PC-3 (cell line): ENCODE measurements at regions of chr13 and their contacts with region 1.

Region 1: GRCh38 chr13:68927387-68928026 is 1180.1 kb upstream of the ATXN8OS start:
- DNase-seq: peak; percentile 60
- ATAC-seq: peak; percentile 84
- H3K4me3 ChIP-seq: no peak overlapping the region
- H3K27ac ChIP-seq: no peak overlapping the region
- H3K4me1 ChIP-seq: no peaks in the 10 kb centered on the region
- H3K27me3 ChIP-seq: no peaks in the 10 kb centered on the region
- CTCF ChIP-seq: peak; percentile 65

Region 2: DNA sequence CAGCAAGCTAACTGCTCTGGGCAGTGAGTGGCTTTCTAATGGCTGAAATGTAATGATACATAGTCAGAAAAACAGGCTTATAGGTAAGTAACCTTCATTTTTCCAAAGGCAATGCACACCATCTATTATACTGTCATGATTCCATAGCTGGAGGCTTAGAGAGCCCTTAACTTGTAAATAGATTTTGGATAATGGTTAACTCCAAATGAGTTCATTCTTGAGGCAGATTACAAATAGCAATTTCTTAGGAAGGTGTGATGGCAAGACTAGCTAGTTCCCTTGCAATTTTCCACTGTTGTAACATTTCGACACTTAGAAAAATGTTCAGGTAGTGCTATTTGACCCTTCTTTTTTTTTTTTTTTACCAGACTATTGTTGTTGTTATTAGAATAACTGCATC is 907.6 kb before region 1 on chr13:
- CTCF ChIA-PET with region 1: no interaction called
- POLR2A ChIA-PET with region 1: no interaction called
- intact Hi-C with region 1: no loop called
- DNase-seq: no peak
- ATAC-seq: no peak
- H3K4me3 ChIP-seq: no peak overlapping the region
- H3K27ac ChIP-seq: no peak overlapping the region
- H3K4me1 ChIP-seq: no peaks in the 10 kb centered on the region
- H3K27me3 ChIP-seq: no peaks in the 10 kb centered on the region
- CTCF ChIP-seq: no peak

Region 3: DNA sequence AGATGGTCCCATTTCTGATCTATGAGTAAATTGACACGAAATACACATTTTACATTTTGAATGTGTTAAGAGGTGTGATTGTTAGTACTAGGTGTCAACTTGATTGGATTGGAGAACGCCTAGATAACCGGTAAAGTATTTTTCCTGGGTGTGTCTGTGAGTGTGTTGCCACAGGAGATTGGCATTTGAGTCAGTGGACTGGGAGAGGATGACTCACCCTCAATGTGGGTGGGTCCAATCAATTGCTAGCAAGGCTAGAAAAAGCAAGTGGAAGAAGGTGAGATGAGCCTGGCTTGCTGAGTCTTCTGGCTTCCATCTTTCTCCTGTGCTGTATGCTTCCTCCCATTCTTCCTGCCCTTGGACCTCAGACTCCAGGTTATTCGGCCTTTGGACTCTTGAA is 736.7 kb before region 1 on chr13:
- CTCF ChIA-PET with region 1: no interaction called
- POLR2A ChIA-PET with region 1: no interaction called
- intact Hi-C with region 1: no loop called
- DNase-seq: peak; percentile 78
- ATAC-seq: peak; percentile 87
- H3K4me3 ChIP-seq: no peak overlapping the region
- H3K27ac ChIP-seq: no peak overlapping the region
- H3K4me1 ChIP-seq: peaks cover 10% of the 10 kb centered on the region
- H3K27me3 ChIP-seq: no peaks in the 10 kb centered on the region
- CTCF ChIP-seq: no peak

Region 4: GRCh38 chr13:68358294-68358705 is 569.2 kb before region 1 on chr13:
- CTCF ChIA-PET with region 1: no interaction called
- POLR2A ChIA-PET with region 1: no interaction called
- intact Hi-C with region 1: loop called (anchors 5 kb)
- DNase-seq: peak; percentile 61
- ATAC-seq: peak; percentile 88
- H3K4me3 ChIP-seq: peak overlapping the region; percentile 23; the same call in 1 of the 2 replicates
- H3K27ac ChIP-seq: peak overlapping the region; percentile 82
- H3K4me1 ChIP-seq: peaks cover 16% of the 10 kb centered on the region
- H3K27me3 ChIP-seq: no peaks in the 10 kb centered on the region
- CTCF ChIP-seq: no peak

Region 5: DNA sequence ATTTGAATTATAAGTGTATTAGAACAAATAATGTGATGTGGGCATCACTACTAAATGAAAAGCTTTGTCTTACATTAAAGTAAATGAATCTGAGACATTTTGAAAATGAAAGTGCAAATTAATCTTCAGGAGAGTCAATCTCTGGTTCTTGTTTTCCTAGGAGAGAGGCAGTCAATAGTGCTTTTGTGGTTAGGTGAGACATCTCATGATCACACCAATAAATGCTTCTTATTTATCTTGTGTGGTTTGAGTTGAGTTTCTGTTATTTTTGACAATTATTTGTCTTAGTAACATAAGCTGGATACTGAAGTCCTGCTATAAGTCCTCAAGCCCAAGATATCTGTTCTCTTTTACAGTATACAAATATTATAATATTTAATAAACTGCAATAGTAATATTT is 319.4 kb before region 1 on chr13:
- CTCF ChIA-PET with region 1: no interaction called
- POLR2A ChIA-PET with region 1: no interaction called
- intact Hi-C with region 1: loop called (anchors 10 kb)
- DNase-seq: peak; percentile 48
- ATAC-seq: peak; percentile 96
- H3K4me3 ChIP-seq: no peak overlapping the region
- H3K27ac ChIP-seq: no peak overlapping the region
- H3K4me1 ChIP-seq: no peaks in the 10 kb centered on the region
- H3K27me3 ChIP-seq: no peaks in the 10 kb centered on the region
- CTCF ChIP-seq: no peak

Region 6: GRCh38 chr13:68644611-68645010 is 282.9 kb before region 1 on chr13:
- CTCF ChIA-PET with region 1: no interaction called
- POLR2A ChIA-PET with region 1: no interaction called
- intact Hi-C with region 1: no loop called
- DNase-seq: no peak
- ATAC-seq: no peak
- H3K4me3 ChIP-seq: no peak overlapping the region
- H3K27ac ChIP-seq: no peak overlapping the region
- H3K4me1 ChIP-seq: no peaks in the 10 kb centered on the region
- H3K27me3 ChIP-seq: no peaks in the 10 kb centered on the region
- CTCF ChIP-seq: no peak

Region 7: DNA sequence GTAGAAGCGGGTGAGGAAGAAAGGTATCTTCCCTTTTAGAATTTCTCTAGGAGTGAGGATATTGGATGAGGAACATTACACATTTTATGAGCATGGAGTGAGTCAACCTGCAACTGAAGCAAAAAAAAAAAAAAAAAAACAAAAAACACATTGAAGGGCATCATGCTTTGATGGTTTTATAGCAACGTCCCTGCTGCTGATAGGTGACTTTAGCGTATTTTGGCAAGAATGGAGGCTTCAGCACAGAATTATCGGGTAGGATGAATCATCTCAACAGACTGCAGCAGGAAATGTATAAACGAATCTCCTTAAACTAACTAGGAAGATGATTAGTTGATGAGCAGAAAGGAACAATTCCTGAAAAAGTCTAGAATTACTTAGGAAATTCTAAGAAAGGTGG is 179.5 kb before region 1 on chr13:
- CTCF ChIA-PET with region 1: no interaction called
- POLR2A ChIA-PET with region 1: no interaction called
- intact Hi-C with region 1: loop called (anchors 10 kb)
- DNase-seq: peak; percentile 72
- ATAC-seq: peak; percentile 81
- H3K4me3 ChIP-seq: peak overlapping the region; percentile 24; the same call in 1 of the 2 replicates
- H3K27ac ChIP-seq: peak overlapping the region; percentile 69
- H3K4me1 ChIP-seq: peaks cover 28% of the 10 kb centered on the region
- H3K27me3 ChIP-seq: no peaks in the 10 kb centered on the region
- CTCF ChIP-seq: no peak

Region 8: GRCh38 chr13:68810660-68811059 is 116.8 kb before region 1 on chr13:
- CTCF ChIA-PET with region 1: interaction called, 18 read pairs
- POLR2A ChIA-PET with region 1: no interaction called
- intact Hi-C with region 1: loop called (anchors 1 kb)
- DNase-seq: peak; percentile 6
- ATAC-seq: peak; percentile 86
- H3K4me3 ChIP-seq: no peak overlapping the region
- H3K27ac ChIP-seq: no peak overlapping the region
- H3K4me1 ChIP-seq: peaks cover 7% of the 10 kb centered on the region; the same call in 1 of the 2 replicates
- H3K27me3 ChIP-seq: no peaks in the 10 kb centered on the region
- CTCF ChIP-seq: peak; percentile 48; the same call in 1 of the 2 replicates

Region 9: DNA sequence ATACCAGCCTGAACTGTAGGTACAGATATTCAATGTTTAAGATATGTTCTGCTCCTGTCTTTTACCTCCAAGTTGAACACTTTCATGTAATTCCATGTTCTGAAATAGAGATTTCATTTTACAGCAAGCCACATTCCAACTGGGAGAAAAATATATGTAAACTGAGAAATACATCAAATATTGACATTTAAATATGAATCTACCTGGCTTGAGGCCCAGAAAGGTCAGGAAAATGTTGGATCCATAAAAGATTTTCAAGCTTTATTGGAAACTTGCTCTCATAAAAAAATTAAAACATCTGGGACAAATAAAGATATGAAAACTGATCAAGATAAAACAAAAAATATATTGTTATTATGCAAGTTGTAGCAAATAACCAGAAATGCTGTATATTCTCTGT is 101.4 kb after region 1 on chr13:
- CTCF ChIA-PET with region 1: no interaction called
- POLR2A ChIA-PET with region 1: no interaction called
- intact Hi-C with region 1: no loop called
- DNase-seq: no peak
- ATAC-seq: peak; percentile 45
- H3K4me3 ChIP-seq: no peak overlapping the region
- H3K27ac ChIP-seq: no peak overlapping the region
- H3K4me1 ChIP-seq: no peaks in the 10 kb centered on the region
- H3K27me3 ChIP-seq: no peaks in the 10 kb centered on the region
- CTCF ChIP-seq: no peak

Region 10: GRCh38 chr13:69324090-69324886 is 396.8 kb after region 1 on chr13:
- CTCF ChIA-PET with region 1: no interaction called
- POLR2A ChIA-PET with region 1: no interaction called
- intact Hi-C with region 1: loop called (anchors 5 kb)
- DNase-seq: peak; percentile 42
- ATAC-seq: peak; percentile 31; the same call in 1 of the 2 replicates
- H3K4me3 ChIP-seq: no peak overlapping the region
- H3K27ac ChIP-seq: no peak overlapping the region
- H3K4me1 ChIP-seq: no peaks in the 10 kb centered on the region
- H3K27me3 ChIP-seq: no peaks in the 10 kb centered on the region
- CTCF ChIP-seq: peak; percentile 51